MCF 10A (cell line): ENCODE measurements at regions of chr3 and their contacts with region 1.

Region 1: DNA sequence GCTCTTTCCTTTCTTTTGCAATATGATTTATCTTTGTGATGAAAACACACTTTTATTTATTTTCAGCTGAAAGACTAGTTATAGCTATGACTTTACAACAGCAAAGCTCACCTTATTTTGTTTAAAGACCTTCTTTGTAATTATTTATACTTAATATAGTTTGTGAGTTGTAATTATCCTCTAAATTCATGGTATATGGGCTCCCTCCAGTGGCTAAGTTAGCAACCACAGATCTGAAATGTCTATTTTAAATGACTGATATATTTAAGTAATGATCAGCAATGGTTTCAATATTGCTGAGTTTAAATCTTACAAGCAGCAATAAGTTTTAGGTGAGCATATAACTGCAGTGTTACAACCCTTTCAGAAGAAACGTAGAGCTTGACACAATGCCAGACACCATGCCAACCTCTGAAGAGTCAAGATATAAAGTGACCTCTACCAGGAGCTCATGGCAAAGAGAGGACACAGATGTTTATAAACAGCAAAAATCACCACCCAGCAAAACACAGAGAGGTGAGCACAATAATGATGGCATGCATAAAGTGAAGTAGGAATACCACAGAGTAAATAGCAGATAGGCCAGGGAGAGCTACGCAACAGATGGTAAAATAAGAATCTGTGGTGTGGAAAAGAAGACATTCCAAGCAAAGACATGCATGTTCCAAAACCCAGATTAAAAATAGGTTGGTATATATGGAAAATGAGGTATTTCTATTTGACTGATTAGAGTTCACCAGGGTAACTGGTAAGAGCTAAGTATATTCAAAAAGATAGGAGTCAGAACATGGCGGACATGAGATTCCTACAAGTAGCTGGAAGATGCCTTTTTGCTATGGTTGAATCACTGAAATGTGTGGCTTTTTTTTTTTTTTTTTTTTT is 143.7 kb upstream of the ZNF385D start:
- DNase-seq: peak; percentile 47
- H3K4me3 Mint-ChIP-seq: no peak overlapping the region
- H3K27ac Mint-ChIP-seq: no peak overlapping the region
- H3K4me1 Mint-ChIP-seq: no peaks in the 10 kb centered on the region
- H3K27me3 Mint-ChIP-seq: no peaks in the 10 kb centered on the region
- CTCF ChIP-seq: peak; percentile 67

Region 2: GRCh38 chr3:20340324-20340928 is 1554.3 kb before region 1 on chr3:
- CTCF ChIA-PET with region 1: interaction called, 14 read pairs
- POLR2A ChIA-PET with region 1: no interaction called
- intact Hi-C with region 1: loop called (anchors 1 kb)
- DNase-seq: peak; percentile 81
- H3K4me3 Mint-ChIP-seq: no peak overlapping the region
- H3K27ac Mint-ChIP-seq: no peak overlapping the region
- H3K4me1 Mint-ChIP-seq: no peaks in the 10 kb centered on the region
- H3K27me3 Mint-ChIP-seq: no peaks in the 10 kb centered on the region
- CTCF ChIP-seq: peak; percentile 91

Region 3: GRCh38 chr3:20930034-20930433 is 964.7 kb before region 1 on chr3:
- CTCF ChIA-PET with region 1: interaction called, 3 read pairs
- POLR2A ChIA-PET with region 1: no interaction called
- intact Hi-C with region 1: loop called (anchors 10 kb)
- DNase-seq: peak; percentile 52
- H3K4me3 Mint-ChIP-seq: no peak overlapping the region
- H3K27ac Mint-ChIP-seq: no peak overlapping the region
- H3K4me1 Mint-ChIP-seq: no peaks in the 10 kb centered on the region
- H3K27me3 Mint-ChIP-seq: no peaks in the 10 kb centered on the region
- CTCF ChIP-seq: peak; percentile 40

Region 4: DNA sequence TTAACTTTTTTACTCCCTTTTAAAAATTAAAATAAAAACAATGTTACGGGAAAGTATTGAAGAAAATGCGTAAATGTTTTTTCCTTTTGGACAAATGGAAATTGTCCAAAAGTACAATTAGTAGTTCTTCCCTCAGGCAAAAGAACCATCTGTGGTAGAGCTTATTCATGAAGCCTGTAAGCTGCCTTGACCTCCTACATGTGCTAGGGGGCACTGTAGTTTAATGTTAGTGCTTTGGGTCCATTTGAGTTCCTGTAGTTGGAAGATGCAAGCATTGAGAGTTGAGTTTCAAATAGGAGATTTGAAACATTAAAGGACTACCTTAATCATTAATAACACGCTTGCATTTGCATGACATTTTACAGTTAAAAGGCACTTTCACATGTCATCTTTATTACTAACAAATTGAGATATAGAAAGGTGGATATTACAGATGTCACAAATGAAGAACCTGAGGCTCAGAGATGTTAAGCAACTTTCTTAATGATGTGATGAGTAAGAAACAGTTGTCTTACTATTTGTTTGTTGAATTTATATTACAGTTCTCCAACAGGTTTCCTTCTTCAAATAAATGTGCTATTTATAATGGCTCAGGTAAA is 141.9 kb before region 1 on chr3:
- CTCF ChIA-PET with region 1: interaction called, 16 read pairs
- POLR2A ChIA-PET with region 1: interaction called, 4 read pairs
- intact Hi-C with region 1: loop called (anchors 1 kb)
- DNase-seq: peak; percentile 74
- H3K4me3 Mint-ChIP-seq: no peak overlapping the region
- H3K27ac Mint-ChIP-seq: no peak overlapping the region
- H3K4me1 Mint-ChIP-seq: peaks cover 15% of the 10 kb centered on the region
- H3K27me3 Mint-ChIP-seq: no peaks in the 10 kb centered on the region
- CTCF ChIP-seq: peak; percentile 61

Region 5: DNA sequence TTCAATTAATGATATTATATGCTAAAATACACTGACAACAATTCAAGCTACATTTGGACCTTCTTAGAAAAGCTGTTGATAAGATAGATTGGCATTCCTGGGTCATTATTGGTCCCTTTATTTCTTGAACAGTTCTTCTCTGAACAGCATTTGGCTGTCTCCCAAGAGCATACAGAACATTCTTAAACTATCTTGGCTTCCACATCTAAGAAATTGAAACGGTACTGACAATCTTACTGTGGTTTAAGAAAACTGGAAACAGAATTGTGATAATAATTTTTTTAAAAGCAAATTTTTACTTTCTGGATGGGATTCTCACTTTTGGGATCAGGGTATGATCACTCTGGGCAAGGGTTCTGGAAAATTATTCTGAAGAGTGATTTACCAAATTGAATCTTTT is 18.0 kb after region 1 on chr3:
- CTCF ChIA-PET with region 1: interaction called, 11 read pairs
- POLR2A ChIA-PET with region 1: no interaction called
- intact Hi-C with region 1: no loop called
- DNase-seq: no peak
- H3K4me3 Mint-ChIP-seq: no peak overlapping the region
- H3K27ac Mint-ChIP-seq: no peak overlapping the region
- H3K4me1 Mint-ChIP-seq: peaks cover 5% of the 10 kb centered on the region
- H3K27me3 Mint-ChIP-seq: no peaks in the 10 kb centered on the region
- CTCF ChIP-seq: no peak

Region 6: GRCh38 chr3:22284559-22284958 is 389.9 kb after region 1 on chr3:
- CTCF ChIA-PET with region 1: no interaction called
- POLR2A ChIA-PET with region 1: no interaction called
- intact Hi-C with region 1: no loop called
- DNase-seq: peak; percentile 39
- H3K4me3 Mint-ChIP-seq: no peak overlapping the region
- H3K27ac Mint-ChIP-seq: peak overlapping the region; percentile 24
- H3K4me1 Mint-ChIP-seq: peaks cover 15% of the 10 kb centered on the region
- H3K27me3 Mint-ChIP-seq: no peaks in the 10 kb centered on the region
- CTCF ChIP-seq: no peak